Cardiac septum (tissue), 1 donor: ENCODE measurements at regions of chr19 and their contacts with region 1.

Region 1: GRCh38 chr19:46299004-46299509 is 2.2 kb downstream of the HIF3A start:
- DNase-seq: peak; percentile 96

Region 2: GRCh38 chr19:46009530-46010510 is 289.2 kb before region 1 on chr19:
- intact Hi-C with region 1: no loop called
- DNase-seq: no peak

Region 3: GRCh38 chr19:46283771-46284170 is 15.3 kb before region 1 on chr19:
- intact Hi-C with region 1: loop called (anchors 2 kb)
- DNase-seq: no peak

Region 4: DNA sequence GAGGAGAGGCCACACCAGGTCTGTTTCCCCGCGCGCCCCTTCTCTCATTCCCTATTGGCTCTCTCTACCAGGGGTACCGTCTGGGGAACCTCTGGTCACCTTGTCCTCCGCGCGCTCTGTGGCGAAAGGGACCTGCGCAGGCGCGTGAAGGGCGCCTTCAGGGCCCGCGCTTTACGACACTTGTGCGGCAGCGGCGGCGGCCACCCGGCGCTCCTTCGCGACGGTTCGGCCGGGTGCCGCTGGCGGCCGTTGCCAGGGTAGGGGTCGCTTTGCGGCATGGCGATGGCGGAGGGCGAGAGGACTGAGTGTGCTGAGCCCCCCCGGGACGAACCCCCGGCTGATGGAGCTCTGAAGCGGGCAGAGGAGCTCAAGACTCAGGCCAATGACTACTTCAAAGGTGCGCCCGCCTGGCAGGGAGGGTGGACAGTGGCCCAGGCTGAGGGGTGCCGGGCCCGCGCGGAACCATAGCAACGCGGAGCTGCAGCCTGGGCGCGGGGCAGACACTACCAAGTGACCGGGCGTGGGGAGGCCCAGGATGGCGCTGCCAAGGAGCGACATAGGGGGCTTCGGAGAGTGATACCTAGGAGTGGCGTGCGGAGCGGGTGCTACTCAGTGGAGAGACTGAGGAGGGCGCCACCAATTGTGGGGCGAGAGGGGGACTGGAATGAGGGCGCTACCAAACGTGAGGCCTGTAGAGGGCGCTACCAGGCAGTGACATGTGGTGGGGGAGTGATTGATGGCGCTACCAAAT is 47.9 kb after region 1 on chr19 and contains the start of gene PPP5C:
- intact Hi-C with region 1: loop called (anchors 5 kb)
- DNase-seq: peak; percentile 93
- total RNA-seq, gene PPP5C: 82.8 TPM

Region 5: GRCh38 chr19:46373421-46374359 is 74.6 kb after region 1 on chr19:
- intact Hi-C with region 1: loop called (anchors 2 kb)
- DNase-seq: peak; percentile 91